MCF 10A (cell line): ENCODE measurements at regions of chr16 and their contacts with region 1.

Region 1: GRCh38 chr16:8797364-8798173 is at the starts of genes PMM2 and TMEM186:
- DNase-seq: peak; percentile 96
- H3K4me3 Mint-ChIP-seq: peak within 1 kb of the TSS; percentile 92
- H3K27ac Mint-ChIP-seq: peak within 1 kb of the TSS; percentile 97
- H3K4me1 Mint-ChIP-seq: peaks cover 9% of the 10 kb centered on the region
- H3K27me3 Mint-ChIP-seq: no peaks in the 10 kb centered on the region
- CTCF ChIP-seq: no peak
- total RNA-seq, gene PMM2: 59.4 and 60.6 TPM in 2 replicates
- total RNA-seq, gene TMEM186: 12.9 and 13.9 TPM in 2 replicates

Region 2: GRCh38 chr16:8660841-8661301 is 136.7 kb before region 1 on chr16:
- CTCF ChIA-PET with region 1: interaction called, 303 read pairs
- POLR2A ChIA-PET with region 1: interaction called, 3 read pairs
- intact Hi-C with region 1: loop called (anchors 1 kb)
- DNase-seq: peak; percentile 75
- H3K4me3 Mint-ChIP-seq: no peak overlapping the region
- H3K27ac Mint-ChIP-seq: no peak overlapping the region
- H3K4me1 Mint-ChIP-seq: no peaks in the 10 kb centered on the region
- H3K27me3 Mint-ChIP-seq: no peaks in the 10 kb centered on the region
- CTCF ChIP-seq: peak; percentile 82

Region 3: GRCh38 chr16:8868416-8869211 is 71.0 kb after region 1 on chr16 and contains the start of gene CARHSP1:
- CTCF ChIA-PET with region 1: interaction called, 7 read pairs
- POLR2A ChIA-PET with region 1: interaction called, 11 read pairs
- intact Hi-C with region 1: no loop called
- DNase-seq: peak; percentile 90
- H3K4me3 Mint-ChIP-seq: peak within 1 kb of the TSS; percentile 87
- H3K27ac Mint-ChIP-seq: peak within 1 kb of the TSS; percentile 86
- H3K4me1 Mint-ChIP-seq: peaks cover 35% of the 10 kb centered on the region
- H3K27me3 Mint-ChIP-seq: no peaks in the 10 kb centered on the region
- CTCF ChIP-seq: no peak
- total RNA-seq, gene CARHSP1: 23.9 and 27.8 TPM in 2 replicates

Region 4: GRCh38 chr16:9192746-9193145 is 395.2 kb after region 1 on chr16:
- CTCF ChIA-PET with region 1: no interaction called
- POLR2A ChIA-PET with region 1: no interaction called
- intact Hi-C with region 1: no loop called
- DNase-seq: no peak
- H3K4me3 Mint-ChIP-seq: no peak overlapping the region
- H3K27ac Mint-ChIP-seq: no peak overlapping the region
- H3K4me1 Mint-ChIP-seq: no peaks in the 10 kb centered on the region
- H3K27me3 Mint-ChIP-seq: peaks cover 9% of the 10 kb centered on the region
- CTCF ChIP-seq: no peak